B cell (primary cell): ENCODE measurements at regions of chr14 and their contacts with region 1.

Region 1: DNA sequence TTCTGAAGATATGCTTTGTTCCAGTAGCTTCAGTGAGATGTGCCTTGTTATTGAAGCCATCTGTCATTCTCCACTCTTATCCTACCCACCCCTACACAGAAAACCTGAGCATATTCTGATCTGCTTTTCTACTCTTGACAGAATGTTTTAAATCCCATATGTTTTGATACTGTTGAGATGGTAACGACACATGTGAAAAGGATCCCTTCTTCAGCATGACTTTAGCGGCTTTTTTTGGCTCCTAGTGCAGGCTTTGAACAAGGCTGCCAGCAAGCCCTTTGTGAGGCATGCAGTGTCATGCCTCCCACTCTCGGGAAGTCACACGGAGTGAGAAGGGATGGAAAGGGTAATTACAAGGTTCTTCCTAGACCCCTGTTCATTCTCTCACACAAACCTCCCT is 228.8 kb upstream of the RGS6 start:
- DNase-seq: no peak
- ATAC-seq: no peak
- H3K4me3 ChIP-seq: no peak overlapping the region
- H3K4me3 Mint-ChIP-seq: no peak overlapping the region
- H3K27ac ChIP-seq: no peak overlapping the region
- H3K27ac Mint-ChIP-seq: no peak overlapping the region
- H3K4me1 ChIP-seq: no peaks in the 10 kb centered on the region
- H3K4me1 Mint-ChIP-seq: no peaks in the 10 kb centered on the region
- H3K27me3 ChIP-seq: no peaks in the 10 kb centered on the region
- H3K27me3 Mint-ChIP-seq: no peaks in the 10 kb centered on the region
- CTCF ChIP-seq: no peak

Region 2: GRCh38 chr14:71689741-71690140 is 13.7 kb before region 1 on chr14:
- CTCF ChIA-PET with region 1: no interaction called
- POLR2A ChIA-PET with region 1: interaction called, 10 read pairs
- intact Hi-C with region 1: no loop called
- DNase-seq: no peak
- ATAC-seq: no peak
- H3K4me3 ChIP-seq: no peak overlapping the region
- H3K4me3 Mint-ChIP-seq: no peak overlapping the region
- H3K27ac ChIP-seq: no peak overlapping the region
- H3K27ac Mint-ChIP-seq: no peak overlapping the region
- H3K4me1 ChIP-seq: no peaks in the 10 kb centered on the region
- H3K4me1 Mint-ChIP-seq: no peaks in the 10 kb centered on the region
- H3K27me3 ChIP-seq: no peaks in the 10 kb centered on the region
- H3K27me3 Mint-ChIP-seq: no peaks in the 10 kb centered on the region
- CTCF ChIP-seq: no peak

Region 3: DNA sequence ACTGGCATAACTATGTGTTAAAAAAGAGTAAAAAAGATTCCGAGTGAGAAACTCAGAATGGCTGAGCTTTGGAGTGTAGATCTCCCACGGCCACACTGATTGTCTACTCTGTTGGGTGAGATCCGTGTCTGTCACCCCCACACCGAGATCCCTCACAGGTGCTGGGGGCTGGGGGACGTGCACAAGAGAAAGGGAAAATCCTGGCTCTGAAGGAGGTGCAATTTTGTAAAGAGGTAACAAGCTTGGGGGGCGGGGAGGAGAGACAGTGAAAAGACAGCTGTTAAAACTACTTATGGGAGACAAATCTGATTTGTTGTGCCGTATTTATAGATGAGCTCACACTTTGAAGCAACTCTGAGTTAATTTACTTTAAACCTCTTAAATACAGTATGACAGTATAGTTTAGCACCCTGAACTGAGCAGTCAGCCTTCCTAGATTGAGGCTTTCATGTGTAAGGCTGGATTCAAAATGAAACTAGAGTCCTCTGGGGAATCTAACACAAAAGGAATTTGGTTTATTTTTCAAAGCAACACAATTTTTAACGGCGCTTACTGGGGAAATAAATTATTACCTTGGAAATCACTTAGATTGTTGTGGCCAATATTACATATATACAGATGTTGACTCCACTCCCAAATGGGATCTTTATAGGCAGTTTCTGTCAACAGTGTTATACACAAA is 61.4 kb after region 1 on chr14:
- CTCF ChIA-PET with region 1: no interaction called
- POLR2A ChIA-PET with region 1: no interaction called
- intact Hi-C with region 1: no loop called
- DNase-seq: no peak
- ATAC-seq: no peak
- H3K4me3 ChIP-seq: no peak overlapping the region
- H3K4me3 Mint-ChIP-seq: no peak overlapping the region
- H3K27ac ChIP-seq: no peak overlapping the region
- H3K27ac Mint-ChIP-seq: no peak overlapping the region
- H3K4me1 ChIP-seq: no peaks in the 10 kb centered on the region
- H3K4me1 Mint-ChIP-seq: no peaks in the 10 kb centered on the region
- H3K27me3 ChIP-seq: peaks cover 0 to 9% (median under 1%) of the 10 kb centered on the region in 4 experiments
- H3K27me3 Mint-ChIP-seq: peaks cover 24% of the 10 kb centered on the region
- CTCF ChIP-seq: no peak